ENCODE measurements at regions of chr12 and their contacts with region 1.

Region 1: GRCh38 chr12:46675736-46676135 is 150.1 kb downstream of the SLC38A4 start:
- DNase-seq: peak; percentile 36
- H3K4me3 ChIP-seq: no peak overlapping the region
- H3K27ac ChIP-seq: peak overlapping the region; percentile 94
- H3K4me1 ChIP-seq: peaks cover 63% of the 10 kb centered on the region
- H3K27me3 ChIP-seq: no peaks in the 10 kb centered on the region
- CTCF ChIP-seq: peak; percentile 51 to 55

Region 2: DNA sequence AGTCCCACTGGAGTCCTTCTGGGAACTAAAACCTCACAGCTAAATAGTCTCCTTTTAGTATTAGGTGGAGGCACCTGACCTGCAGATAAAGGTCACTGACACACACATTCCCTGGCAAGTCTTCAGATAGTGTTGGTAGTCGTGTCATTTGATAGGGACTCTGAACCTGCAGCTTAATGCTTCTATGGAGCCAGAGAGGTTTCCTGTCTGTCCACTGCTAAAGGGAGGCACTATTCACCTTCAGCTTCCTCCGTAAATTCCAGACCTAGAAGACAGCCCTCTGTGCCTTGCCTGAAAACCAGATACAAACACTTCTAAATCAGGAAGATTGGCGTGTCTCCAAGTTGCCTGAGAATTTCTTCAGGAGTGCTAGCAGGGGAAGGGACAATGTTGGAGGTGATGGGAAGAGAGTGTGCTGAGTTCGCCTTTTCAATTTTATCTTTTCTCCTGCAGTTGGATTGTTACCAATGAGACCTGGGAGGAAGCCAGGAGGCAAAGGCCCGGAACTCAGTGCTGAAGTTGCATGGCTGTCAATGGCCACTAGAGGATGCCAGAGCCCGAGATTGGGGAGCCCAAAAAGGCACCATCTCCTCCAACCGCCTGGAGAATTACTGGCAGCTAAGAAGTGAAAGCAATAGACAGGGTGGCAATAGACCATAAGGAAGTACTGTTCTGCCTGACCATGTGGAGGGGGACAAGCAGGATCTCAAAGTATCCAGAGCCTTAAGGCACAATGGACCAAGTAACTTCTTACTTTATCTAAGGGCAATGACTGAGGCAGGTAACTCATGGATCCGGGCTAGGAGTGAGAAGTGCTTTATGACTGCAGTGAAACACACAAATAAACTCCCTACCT is 603.7 kb before region 1 on chr12:
- CTCF ChIA-PET with region 1: interaction called, 5 read pairs
- dilution Hi-C with region 1: no loop called
- in situ Hi-C with region 1: no loop called
- intact Hi-C with region 1: loop called (anchors 5 kb)
- DNase-seq: peak; percentile 70
- H3K4me3 ChIP-seq: no peak overlapping the region
- H3K27ac ChIP-seq: peak overlapping the region; percentile 15
- H3K4me1 ChIP-seq: peaks cover 24% of the 10 kb centered on the region
- H3K27me3 ChIP-seq: no peaks in the 10 kb centered on the region
- CTCF ChIP-seq: peak; percentile 100

Region 3: GRCh38 chr12:46268590-46269558 is 406.9 kb before region 1 on chr12 and contains the start of gene SLC38A1:
- CTCF ChIA-PET with region 1: no interaction called
- dilution Hi-C with region 1: no loop called
- in situ Hi-C with region 1: no loop called
- intact Hi-C with region 1: loop called (anchors 2 kb)
- DNase-seq: peak; percentile 88
- H3K4me3 ChIP-seq: peak within 1 kb of the TSS; percentile 51 to 97 (median 95)
- H3K27ac ChIP-seq: peak within 1 kb of the TSS; percentile 96
- H3K4me1 ChIP-seq: peaks cover 31% of the 10 kb centered on the region
- H3K27me3 ChIP-seq: no peaks in the 10 kb centered on the region
- CTCF ChIP-seq: peak in 1 of 2 donors; percentile 17
- total RNA-seq, gene SLC38A1: 208 to 360 TPM

Region 4: GRCh38 chr12:46364777-46365580 is 310.8 kb before region 1 on chr12:
- CTCF ChIA-PET with region 1: no interaction called
- dilution Hi-C with region 1: loop called (anchors 5 kb)
- in situ Hi-C with region 1: no loop called
- intact Hi-C with region 1: no loop called
- DNase-seq: peak; percentile 73
- H3K4me3 ChIP-seq: no peak overlapping the region
- H3K27ac ChIP-seq: peak overlapping the region; percentile 46
- H3K4me1 ChIP-seq: peaks cover 48% of the 10 kb centered on the region
- H3K27me3 ChIP-seq: no peaks in the 10 kb centered on the region
- CTCF ChIP-seq: no peak

Region 5: DNA sequence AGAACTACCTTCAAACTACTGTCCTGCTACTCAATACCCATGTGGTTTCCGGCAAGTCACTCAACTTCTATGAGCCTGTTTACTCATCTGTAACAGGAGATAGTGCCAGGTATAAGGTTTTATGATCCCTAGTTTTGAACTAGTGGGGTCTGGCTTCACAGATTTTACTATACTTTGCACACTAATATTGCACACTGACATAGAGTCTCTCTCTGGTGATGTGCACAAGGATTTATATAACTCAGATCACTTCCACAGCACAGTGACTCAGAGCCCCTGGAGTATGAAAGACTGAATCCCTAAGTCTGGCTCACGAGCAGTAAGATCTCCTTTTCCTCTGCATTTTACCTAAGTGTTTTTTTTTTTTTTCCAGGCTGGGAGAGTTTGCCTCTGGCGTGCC is 233.5 kb before region 1 on chr12:
- CTCF ChIA-PET with region 1: no interaction called
- dilution Hi-C with region 1: no loop called
- in situ Hi-C with region 1: loop called in 1 of 2 experiments (anchors 5 kb)
- intact Hi-C with region 1: no loop called
- DNase-seq: peak; percentile 73
- H3K4me3 ChIP-seq: peak overlapping the region in 2 of 3 experiments; percentile 7 to 10
- H3K27ac ChIP-seq: peak overlapping the region; percentile 96
- H3K4me1 ChIP-seq: peaks cover 60% of the 10 kb centered on the region
- H3K27me3 ChIP-seq: no peaks in the 10 kb centered on the region
- CTCF ChIP-seq: no peak

Region 6: DNA sequence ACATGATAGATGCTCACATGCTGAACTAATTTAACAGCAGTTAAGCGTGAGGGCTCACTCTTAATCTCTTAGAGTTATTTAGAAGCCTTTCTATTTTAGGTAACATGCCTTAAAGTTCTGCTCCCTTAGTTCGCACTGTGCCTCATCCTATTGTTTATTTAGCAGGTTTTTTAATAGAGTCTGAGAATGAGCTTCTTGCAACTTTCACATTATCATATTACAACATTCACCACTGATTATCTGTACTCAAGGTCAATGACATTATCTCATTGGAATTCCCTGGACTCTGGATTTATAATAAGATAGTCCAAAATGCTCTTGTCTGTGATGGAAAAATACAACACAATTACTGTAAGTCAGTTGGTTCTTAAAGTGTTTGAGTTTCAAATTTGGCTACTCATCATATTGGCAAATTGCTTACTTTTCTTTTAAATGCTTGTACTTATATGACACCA is 119.6 kb before region 1 on chr12:
- CTCF ChIA-PET with region 1: no interaction called
- dilution Hi-C with region 1: no loop called
- in situ Hi-C with region 1: no loop called
- intact Hi-C with region 1: loop called (anchors 2 kb)
- DNase-seq: peak; percentile 89
- H3K4me3 ChIP-seq: no peak overlapping the region
- H3K27ac ChIP-seq: peak overlapping the region; percentile 99
- H3K4me1 ChIP-seq: peaks cover 84% of the 10 kb centered on the region
- H3K27me3 ChIP-seq: no peaks in the 10 kb centered on the region
- CTCF ChIP-seq: no peak

Region 7: GRCh38 chr12:46983393-46984266 is 307.9 kb after region 1 on chr12:
- CTCF ChIA-PET with region 1: interaction called, 4 read pairs
- dilution Hi-C with region 1: no loop called
- in situ Hi-C with region 1: no loop called
- intact Hi-C with region 1: loop called (anchors 2 kb)
- DNase-seq: peak; percentile 60
- H3K4me3 ChIP-seq: no peak overlapping the region
- H3K27ac ChIP-seq: no peak overlapping the region
- H3K4me1 ChIP-seq: peaks cover 20% of the 10 kb centered on the region
- H3K27me3 ChIP-seq: no peaks in the 10 kb centered on the region
- CTCF ChIP-seq: peak; percentile 85 to 93